Activated naive CD4-positive, alpha-beta T cell treated with anti-CD3 and anti-CD28 coated beads for 36 hours (primary cell): ENCODE measurements at regions of chr14 and their contacts with region 1.

Region 1: DNA sequence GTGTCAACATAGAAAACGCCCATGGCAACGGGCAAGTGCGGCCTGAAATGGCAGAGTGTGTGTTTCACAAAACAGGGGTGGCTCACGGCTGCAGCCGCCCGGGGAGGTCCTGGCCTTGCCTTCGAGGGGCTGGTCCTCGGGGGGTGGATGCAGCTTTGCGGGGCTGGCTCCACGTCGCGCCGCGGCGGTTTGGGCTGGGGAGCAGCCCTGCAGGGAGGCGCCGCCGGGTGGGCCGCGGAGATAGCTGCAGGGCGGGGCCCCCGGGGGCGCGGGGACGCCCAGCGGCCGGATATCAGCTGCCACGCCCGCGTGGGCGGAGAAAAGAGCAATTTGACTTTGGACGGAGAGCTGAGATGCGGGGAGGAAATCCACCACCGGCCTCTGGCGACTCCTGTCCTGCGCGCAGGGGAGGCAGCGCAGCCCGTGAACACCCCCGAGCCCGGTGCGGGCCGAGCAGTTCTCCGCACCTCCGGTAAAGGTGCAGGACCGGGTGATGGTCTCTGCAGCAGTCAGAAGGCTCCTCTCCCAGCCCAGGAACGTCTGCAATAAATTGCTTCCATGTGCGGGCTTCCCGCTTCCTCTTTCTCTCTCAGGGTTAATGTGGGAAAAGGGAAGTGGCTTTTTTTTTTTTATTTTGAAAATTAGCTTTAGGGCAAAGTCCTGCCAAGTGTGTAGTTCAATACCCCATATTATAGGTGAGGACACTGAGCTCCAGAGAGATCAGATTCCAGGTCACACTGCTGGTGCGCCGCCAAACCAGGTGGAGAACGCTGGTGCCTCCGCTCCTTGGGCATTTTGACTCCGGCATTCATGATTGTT is 110.5 kb downstream of the ARF6 start:
- DNase-seq: peak; percentile 86
- H3K4me3 Mint-ChIP-seq: peak overlapping the region; percentile 92
- H3K27ac Mint-ChIP-seq: peak overlapping the region; percentile 98
- H3K4me1 Mint-ChIP-seq: peaks cover 42% of the 10 kb centered on the region
- H3K27me3 Mint-ChIP-seq: no peaks in the 10 kb centered on the region

Region 2: DNA sequence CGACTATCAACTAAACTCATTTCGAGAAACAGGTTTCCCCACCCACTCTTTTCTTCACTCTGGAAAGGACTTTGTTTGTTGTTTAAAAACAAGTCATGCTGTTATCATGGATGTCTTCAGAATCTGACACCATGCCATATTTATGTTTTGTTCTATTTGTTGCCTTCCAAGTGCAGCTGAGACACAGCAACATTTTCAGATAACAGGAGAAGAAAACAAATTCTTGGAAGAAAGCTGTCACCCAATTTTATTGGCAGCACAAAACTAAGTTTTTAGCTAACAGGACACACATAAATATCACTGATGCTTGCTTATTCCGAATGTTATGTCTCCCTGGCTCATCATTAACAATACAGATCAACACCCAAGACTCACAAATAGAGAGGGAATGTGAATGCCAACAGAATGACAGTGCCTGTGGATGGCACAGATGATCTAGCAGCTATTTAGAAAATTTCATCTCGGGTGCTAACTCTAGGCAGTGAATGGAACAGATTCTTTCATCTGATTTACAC is 565.1 kb before region 1 on chr14:
- CTCF ChIA-PET with region 1: no interaction called
- intact Hi-C with region 1: no loop called
- DNase-seq: no peak
- H3K4me3 Mint-ChIP-seq: no peak overlapping the region
- H3K27ac Mint-ChIP-seq: no peak overlapping the region
- H3K4me1 Mint-ChIP-seq: no peaks in the 10 kb centered on the region
- H3K27me3 Mint-ChIP-seq: no peaks in the 10 kb centered on the region

Region 3: DNA sequence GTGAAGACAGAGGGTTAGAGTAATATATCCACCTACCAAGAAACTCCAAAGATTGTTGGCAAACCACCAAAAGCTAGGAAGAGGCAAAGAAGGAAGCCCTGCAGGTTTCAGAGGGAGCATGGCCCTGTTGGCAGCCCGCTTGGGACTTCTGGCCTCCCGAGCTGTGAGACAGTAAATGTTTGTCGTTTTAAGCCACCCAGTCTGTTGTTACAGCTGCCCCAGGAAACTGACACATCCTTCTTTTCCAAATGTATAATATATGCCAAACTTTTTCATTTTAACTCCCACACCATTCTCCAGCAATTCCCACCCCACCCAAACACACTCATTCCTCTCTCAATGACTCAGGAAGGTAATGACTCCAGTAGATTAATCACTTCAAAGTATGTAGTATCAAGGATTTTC is 491.3 kb before region 1 on chr14:
- CTCF ChIA-PET with region 1: no interaction called
- intact Hi-C with region 1: no loop called
- DNase-seq: no peak
- H3K4me3 Mint-ChIP-seq: no peak overlapping the region
- H3K27ac Mint-ChIP-seq: no peak overlapping the region
- H3K4me1 Mint-ChIP-seq: no peaks in the 10 kb centered on the region
- H3K27me3 Mint-ChIP-seq: no peaks in the 10 kb centered on the region

Region 4: DNA sequence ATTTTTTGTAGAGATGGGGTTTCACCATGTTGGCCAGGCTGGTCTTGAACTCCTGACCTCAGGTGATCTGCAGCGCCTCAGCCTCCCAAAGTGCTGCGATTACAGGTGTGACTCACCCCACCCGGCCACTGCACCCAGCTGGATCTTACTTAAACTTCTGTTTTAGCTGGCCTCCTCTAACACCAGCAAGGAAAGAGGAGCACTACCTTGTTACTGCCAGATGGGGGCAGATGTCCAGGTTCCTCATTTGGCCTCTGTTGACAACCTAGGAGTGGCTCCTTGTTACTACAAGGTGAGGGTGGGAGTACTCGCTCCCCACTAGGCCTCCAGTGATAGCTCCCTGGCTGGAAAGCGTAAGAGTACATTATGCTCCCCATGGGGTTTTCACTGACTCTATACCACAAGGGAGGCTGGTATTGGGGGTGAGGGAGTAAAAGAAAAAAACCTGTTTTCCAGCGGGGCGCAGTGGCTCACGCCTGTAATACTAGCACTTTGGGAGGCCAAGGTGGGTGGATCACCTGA is 123.7 kb before region 1 on chr14:
- CTCF ChIA-PET with region 1: interaction called, 6 read pairs
- intact Hi-C with region 1: loop called (anchors 1 kb)
- DNase-seq: peak; percentile 79
- H3K4me3 Mint-ChIP-seq: no peak overlapping the region
- H3K27ac Mint-ChIP-seq: peak overlapping the region; percentile 30
- H3K4me1 Mint-ChIP-seq: peaks cover 17% of the 10 kb centered on the region
- H3K27me3 Mint-ChIP-seq: no peaks in the 10 kb centered on the region

Region 5: DNA sequence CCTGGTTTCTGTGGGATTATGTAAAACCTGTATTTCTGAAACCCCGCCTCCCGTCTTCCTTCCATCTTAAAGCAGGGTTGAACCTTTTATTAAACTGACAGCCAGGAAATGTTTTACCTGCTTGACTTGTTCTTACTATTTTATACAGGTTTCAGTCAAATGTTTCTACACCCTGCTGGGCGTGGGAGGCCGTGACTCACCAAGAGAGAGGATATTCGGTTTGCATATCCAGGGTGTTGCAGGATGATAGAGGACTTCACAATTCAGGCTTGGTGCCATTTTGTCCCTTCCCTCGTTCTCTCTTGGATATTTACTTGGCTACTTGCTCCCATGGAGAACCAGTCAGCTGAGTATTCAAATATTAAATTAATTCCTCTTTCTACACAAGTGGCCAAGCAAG is 40.8 kb before region 1 on chr14:
- CTCF ChIA-PET with region 1: interaction called, 3 read pairs
- intact Hi-C with region 1: loop called (anchors 1 kb)
- DNase-seq: peak; percentile 85
- H3K4me3 Mint-ChIP-seq: no peak overlapping the region
- H3K27ac Mint-ChIP-seq: peak overlapping the region; percentile 66
- H3K4me1 Mint-ChIP-seq: peaks cover 42% of the 10 kb centered on the region
- H3K27me3 Mint-ChIP-seq: no peaks in the 10 kb centered on the region

Region 6: DNA sequence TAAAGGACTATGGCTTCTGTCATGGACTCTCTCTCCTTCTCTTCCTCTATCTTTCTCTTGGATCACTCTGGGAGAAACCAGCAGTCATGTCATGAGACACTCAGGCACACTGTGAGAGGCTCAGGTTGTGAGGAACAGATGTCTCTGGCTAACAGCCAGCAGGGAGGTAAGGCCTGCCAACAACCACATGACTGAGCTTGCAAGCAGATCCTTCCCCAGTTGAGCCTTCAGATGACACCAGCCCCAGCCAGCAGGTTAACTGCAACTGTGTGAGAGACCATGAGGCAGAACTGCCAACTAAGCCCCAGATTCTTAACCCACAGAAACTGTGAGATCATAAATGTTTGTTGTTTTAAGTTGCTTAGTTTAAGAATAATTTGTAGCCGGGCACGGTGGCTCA is 22.4 kb after region 1 on chr14:
- CTCF ChIA-PET with region 1: interaction called, 3 read pairs
- intact Hi-C with region 1: loop called (anchors 1 kb)
- DNase-seq: peak; percentile 41
- H3K4me3 Mint-ChIP-seq: no peak overlapping the region
- H3K27ac Mint-ChIP-seq: no peak overlapping the region
- H3K4me1 Mint-ChIP-seq: peaks cover 27% of the 10 kb centered on the region
- H3K27me3 Mint-ChIP-seq: no peaks in the 10 kb centered on the region

Region 7: DNA sequence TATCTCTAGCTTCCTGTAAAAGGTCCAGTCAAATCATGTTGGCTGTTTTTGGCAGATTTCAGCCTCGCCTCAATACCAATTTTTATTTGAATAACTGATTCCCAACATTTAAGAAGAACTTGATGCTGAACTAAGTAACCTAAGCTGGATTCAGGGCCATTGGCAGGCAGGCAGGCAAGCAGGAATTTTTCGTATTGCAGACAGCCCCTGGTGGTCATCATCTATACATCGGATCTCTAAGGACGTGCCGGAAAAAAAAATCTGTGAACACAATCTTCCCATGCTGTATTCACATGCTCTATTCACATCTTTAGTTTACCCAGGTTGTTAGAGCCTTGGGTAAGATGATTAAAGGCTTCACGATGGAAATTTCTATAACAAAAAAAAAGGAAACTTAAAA is 105.9 kb after region 1 on chr14:
- CTCF ChIA-PET with region 1: interaction called, 4 read pairs
- intact Hi-C with region 1: loop called (anchors 1 kb)
- DNase-seq: no peak
- H3K4me3 Mint-ChIP-seq: no peak overlapping the region
- H3K27ac Mint-ChIP-seq: peak overlapping the region; percentile 59
- H3K4me1 Mint-ChIP-seq: peaks cover 43% of the 10 kb centered on the region
- H3K27me3 Mint-ChIP-seq: no peaks in the 10 kb centered on the region

Region 8: DNA sequence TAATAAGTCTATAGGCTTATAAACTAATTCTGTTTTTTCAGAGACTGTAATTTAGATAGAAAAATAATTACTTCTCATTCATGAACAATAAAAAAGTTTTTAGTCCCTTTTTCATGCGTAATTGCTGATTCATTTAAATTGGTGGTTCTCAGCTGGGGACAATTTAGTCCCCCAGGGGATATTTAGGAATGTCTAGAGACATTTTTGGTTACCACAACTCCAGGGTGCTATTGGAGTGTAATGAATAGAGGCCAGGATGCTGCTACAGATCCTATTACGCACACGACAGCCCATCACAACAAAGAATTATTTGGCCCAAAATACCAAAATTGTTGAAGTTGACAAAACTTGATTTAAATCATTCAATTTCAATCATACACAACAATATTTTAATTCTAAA is 135.8 kb after region 1 on chr14:
- CTCF ChIA-PET with region 1: no interaction called
- intact Hi-C with region 1: no loop called
- DNase-seq: no peak
- H3K4me3 Mint-ChIP-seq: no peak overlapping the region
- H3K27ac Mint-ChIP-seq: no peak overlapping the region
- H3K4me1 Mint-ChIP-seq: no peaks in the 10 kb centered on the region
- H3K27me3 Mint-ChIP-seq: no peaks in the 10 kb centered on the region

Region 9: GRCh38 chr14:51651388-51652167 is 1648.2 kb after region 1 on chr14 and contains the start of gene FRMD6:
- CTCF ChIA-PET with region 1: no interaction called
- intact Hi-C with region 1: loop called (anchors 5 kb)
- DNase-seq: peak; percentile 82
- H3K4me3 Mint-ChIP-seq: peak within 1 kb of the TSS; percentile 78
- H3K27ac Mint-ChIP-seq: peak within 1 kb of the TSS; percentile 41
- H3K4me1 Mint-ChIP-seq: peaks cover 21% of the 10 kb centered on the region
- H3K27me3 Mint-ChIP-seq: peaks cover 7% of the 10 kb centered on the region
- total RNA-seq, gene FRMD6: 3.0 to 3.2 TPM